Activated T-helper 2 cell treated with anti-CD3 and anti-CD28 coated beads, Interferon-gamma antibody, Interleukin-2, Interleukin-4, amounts not matched to agents 10 μg/mL and 5 μg/mL and 100 μg/mL, durations not matched to agents 14 hours and 24 hours and 36 hours (primary cell): ENCODE measurements at regions of chr15 and their contacts with region 1.

Region 1: GRCh38 chr15:44261007-44261706 is 27.4 kb upstream of the GOLM2 start:
- DNase-seq: no peak
- H3K4me3 Mint-ChIP-seq: no peak overlapping the region
- H3K27ac Mint-ChIP-seq: no peak overlapping the region
- H3K4me1 Mint-ChIP-seq: no peaks in the 10 kb centered on the region
- H3K27me3 Mint-ChIP-seq: peaks cover 19% of the 10 kb centered on the region

Region 2: GRCh38 chr15:44275150-44275830 is 14.1 kb after region 1 on chr15:
- intact Hi-C with region 1: loop called (anchors 1 kb)
- DNase-seq: no peak
- H3K4me3 Mint-ChIP-seq: no peak overlapping the region
- H3K27ac Mint-ChIP-seq: no peak overlapping the region
- H3K4me1 Mint-ChIP-seq: no peaks in the 10 kb centered on the region
- H3K27me3 Mint-ChIP-seq: peaks cover 20% of the 10 kb centered on the region